ENCODE measurements at regions of chr1 and their contacts with region 1.

Region 1: GRCh38 chr1:8431019-8431418 is 113.1 kb downstream of the SLC45A1 start:
- DNase-seq: peak in 6 of 9 experiments; percentile 38 to 66 (median 59)
- ATAC-seq: peak; percentile 76
- H3K4me3 ChIP-seq: no peak overlapping the region
- H3K4me3 Mint-ChIP-seq: peak overlapping the region; percentile 33
- H3K27ac ChIP-seq: peak overlapping the region in 1 of 2 experiments; percentile 37
- H3K27ac Mint-ChIP-seq: peak overlapping the region; percentile 90
- H3K4me1 ChIP-seq: peaks cover 50% of the 10 kb centered on the region
- H3K4me1 Mint-ChIP-seq: peaks cover 72% of the 10 kb centered on the region
- H3K27me3 ChIP-seq: no peaks in the 10 kb centered on the region
- H3K27me3 Mint-ChIP-seq: no peaks in the 10 kb centered on the region
- CTCF ChIP-seq: peak; percentile 45

Region 2: GRCh38 chr1:8396786-8397406 is 34.1 kb before region 1 on chr1:
- CTCF ChIA-PET with region 1: no interaction called
- POLR2A ChIA-PET with region 1: interaction called, 3 read pairs
- intact Hi-C with region 1: loop called in 1 of 2 experiments (anchors 5 kb)
- DNase-seq: peak in 2 of 9 experiments; percentile 30 to 51
- ATAC-seq: peak; percentile 61
- H3K4me3 ChIP-seq: no peak overlapping the region
- H3K4me3 Mint-ChIP-seq: peak overlapping the region; percentile 9
- H3K27ac ChIP-seq: peak overlapping the region in 1 of 2 experiments; percentile 36
- H3K27ac Mint-ChIP-seq: peak overlapping the region; percentile 92
- H3K4me1 ChIP-seq: peaks cover 41% of the 10 kb centered on the region
- H3K4me1 Mint-ChIP-seq: peaks cover 63% of the 10 kb centered on the region
- H3K27me3 ChIP-seq: no peaks in the 10 kb centered on the region
- H3K27me3 Mint-ChIP-seq: no peaks in the 10 kb centered on the region
- CTCF ChIP-seq: no peak

Region 3: DNA sequence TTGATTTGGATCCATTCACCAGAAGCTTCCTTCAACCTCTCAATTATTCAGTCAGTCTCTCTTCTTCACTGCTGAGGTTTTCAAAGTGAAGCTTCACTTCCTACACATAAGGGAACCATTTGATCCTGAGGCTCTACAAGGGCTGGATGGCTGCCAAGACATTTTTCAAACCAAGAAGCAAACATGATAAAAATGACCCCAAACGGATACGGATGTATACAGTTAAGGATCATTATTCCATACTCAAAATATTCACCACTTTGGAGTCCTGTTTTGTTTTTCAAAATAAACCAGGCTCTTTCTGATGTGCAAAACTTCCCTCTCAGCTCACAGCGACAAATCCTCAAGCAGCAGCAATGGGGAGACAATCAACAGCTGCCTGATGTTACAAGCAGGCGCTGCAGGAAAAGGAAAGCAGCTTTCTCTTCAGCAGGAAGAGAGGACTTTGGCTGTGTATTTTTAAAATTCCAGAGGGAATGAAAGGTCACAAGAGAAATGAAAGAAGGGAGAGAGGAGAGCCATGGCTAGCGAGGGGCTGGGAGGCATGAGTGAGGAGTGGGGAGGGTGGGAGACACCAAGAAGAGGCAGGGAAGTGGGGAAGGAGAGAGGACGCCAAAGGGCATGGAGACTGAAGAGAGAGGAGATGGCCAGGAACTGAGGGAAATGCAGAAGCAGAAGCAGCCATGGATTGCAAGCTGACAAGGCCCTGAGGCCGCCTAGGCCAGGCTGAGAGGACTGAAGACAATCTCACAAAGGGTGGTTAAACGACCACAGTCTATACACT is 32.3 kb after region 1 on chr1:
- CTCF ChIA-PET with region 1: no interaction called
- POLR2A ChIA-PET with region 1: no interaction called
- intact Hi-C with region 1: no loop called
- DNase-seq: peak in 3 of 9 experiments; percentile 11 to 53 (median 26)
- ATAC-seq: peak; percentile 61
- H3K4me3 ChIP-seq: no peak overlapping the region
- H3K4me3 Mint-ChIP-seq: no peak overlapping the region
- H3K27ac ChIP-seq: no peak overlapping the region
- H3K27ac Mint-ChIP-seq: peak overlapping the region; percentile 88
- H3K4me1 ChIP-seq: peaks cover 27% of the 10 kb centered on the region
- H3K4me1 Mint-ChIP-seq: peaks cover 28% of the 10 kb centered on the region
- H3K27me3 ChIP-seq: no peaks in the 10 kb centered on the region
- H3K27me3 Mint-ChIP-seq: no peaks in the 10 kb centered on the region
- CTCF ChIP-seq: no peak

Measured in CD8-positive, alpha-beta T cell (primary cell).